Endothelial cell of umbilical vein (primary cell): ENCODE measurements at regions of chr3 and their contacts with region 1.

Region 1: GRCh38 chr3:64612082-64612860 is 75.5 kb downstream of the ADAMTS9 start:
- DNase-seq: no peak
- H3K4me3 ChIP-seq: no peak overlapping the region
- H3K27ac ChIP-seq: no peak overlapping the region
- H3K4me1 ChIP-seq: peaks cover 16% of the 10 kb centered on the region
- H3K27me3 ChIP-seq: no peaks in the 10 kb centered on the region
- CTCF ChIP-seq: no peak
- POLR2A ChIP-seq: no peak

Region 2: GRCh38 chr3:64576376-64576775 is 35.9 kb before region 1 on chr3:
- CTCF ChIA-PET with region 1: no interaction called
- POLR2A ChIA-PET with region 1: no interaction called
- dilution Hi-C with region 1: no loop called
- intact Hi-C with region 1: no loop called
- DNase-seq: no peak
- H3K4me3 ChIP-seq: no peak overlapping the region
- H3K27ac ChIP-seq: no peak overlapping the region
- H3K4me1 ChIP-seq: peaks cover 5% of the 10 kb centered on the region
- H3K27me3 ChIP-seq: no peaks in the 10 kb centered on the region
- CTCF ChIP-seq: no peak
- POLR2A ChIP-seq: no peak

Region 3: DNA sequence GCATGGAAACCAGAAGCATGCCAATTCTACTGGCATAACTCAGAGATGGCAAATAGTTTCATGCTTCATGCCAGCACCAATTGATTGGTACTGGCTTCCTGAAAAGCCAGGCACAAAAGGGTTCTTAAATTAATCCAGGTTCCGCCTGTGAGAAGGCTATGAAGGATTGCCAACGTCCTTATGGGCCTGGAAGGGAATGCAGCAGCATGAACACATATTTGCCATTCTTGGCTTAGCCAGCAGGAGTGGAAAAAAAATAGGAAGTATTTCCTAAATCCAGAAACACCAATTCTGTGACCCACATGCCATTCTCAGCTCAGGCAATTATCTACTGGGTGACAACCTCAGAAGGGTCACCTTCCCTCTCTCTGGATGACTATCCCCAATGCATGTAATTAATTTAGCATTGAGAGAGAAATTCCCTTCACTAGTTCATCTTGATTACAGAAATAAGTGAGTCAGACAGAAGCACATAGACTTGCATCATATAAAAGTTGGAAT is 39.5 kb after region 1 on chr3:
- CTCF ChIA-PET with region 1: interaction called, 4 read pairs
- POLR2A ChIA-PET with region 1: no interaction called
- dilution Hi-C with region 1: no loop called
- intact Hi-C with region 1: loop called (anchors 1 kb)
- DNase-seq: peak; percentile 14
- H3K4me3 ChIP-seq: no peak overlapping the region
- H3K27ac ChIP-seq: no peak overlapping the region
- H3K4me1 ChIP-seq: peaks cover 22% of the 10 kb centered on the region
- H3K27me3 ChIP-seq: no peaks in the 10 kb centered on the region
- CTCF ChIP-seq: no peak
- POLR2A ChIP-seq: no peak

Region 4: DNA sequence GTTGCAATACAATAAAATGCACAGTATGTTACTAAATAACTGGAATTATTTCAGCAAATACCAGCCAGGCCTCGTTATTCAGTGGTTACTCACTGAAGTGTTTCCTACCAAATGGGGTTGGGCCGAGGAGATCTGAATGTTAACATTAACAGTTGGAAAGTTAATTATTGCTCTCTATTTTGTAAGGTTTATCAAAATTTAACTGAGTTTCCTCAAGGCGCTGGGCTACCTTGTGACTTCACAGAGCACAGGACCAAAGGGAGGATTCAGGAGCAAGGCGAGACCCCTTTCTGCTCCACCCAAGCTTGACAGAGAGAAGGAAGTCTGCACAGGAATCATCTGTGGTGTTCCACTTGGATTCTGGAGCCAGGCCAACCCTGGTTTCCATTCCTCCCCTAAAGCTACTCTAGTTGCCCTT is 53.9 kb after region 1 on chr3:
- CTCF ChIA-PET with region 1: interaction called, 3 read pairs
- POLR2A ChIA-PET with region 1: no interaction called
- dilution Hi-C with region 1: no loop called
- intact Hi-C with region 1: loop called (anchors 1 kb)
- DNase-seq: peak; percentile 83
- H3K4me3 ChIP-seq: no peak overlapping the region
- H3K27ac ChIP-seq: peak overlapping the region; percentile 70
- H3K4me1 ChIP-seq: peaks cover 24% of the 10 kb centered on the region
- H3K27me3 ChIP-seq: no peaks in the 10 kb centered on the region
- CTCF ChIP-seq: no peak
- POLR2A ChIP-seq: no peak

Region 5: GRCh38 chr3:64796607-64797399 is 184.5 kb after region 1 on chr3:
- CTCF ChIA-PET with region 1: no interaction called
- POLR2A ChIA-PET with region 1: no interaction called
- dilution Hi-C with region 1: no loop called
- intact Hi-C with region 1: loop called (anchors 1 kb)
- DNase-seq: peak; percentile 88
- H3K4me3 ChIP-seq: no peak overlapping the region
- H3K27ac ChIP-seq: peak overlapping the region; percentile 87
- H3K4me1 ChIP-seq: peaks cover 26% of the 10 kb centered on the region
- H3K27me3 ChIP-seq: no peaks in the 10 kb centered on the region
- CTCF ChIP-seq: no peak
- POLR2A ChIP-seq: peak; percentile 71

Region 6: DNA sequence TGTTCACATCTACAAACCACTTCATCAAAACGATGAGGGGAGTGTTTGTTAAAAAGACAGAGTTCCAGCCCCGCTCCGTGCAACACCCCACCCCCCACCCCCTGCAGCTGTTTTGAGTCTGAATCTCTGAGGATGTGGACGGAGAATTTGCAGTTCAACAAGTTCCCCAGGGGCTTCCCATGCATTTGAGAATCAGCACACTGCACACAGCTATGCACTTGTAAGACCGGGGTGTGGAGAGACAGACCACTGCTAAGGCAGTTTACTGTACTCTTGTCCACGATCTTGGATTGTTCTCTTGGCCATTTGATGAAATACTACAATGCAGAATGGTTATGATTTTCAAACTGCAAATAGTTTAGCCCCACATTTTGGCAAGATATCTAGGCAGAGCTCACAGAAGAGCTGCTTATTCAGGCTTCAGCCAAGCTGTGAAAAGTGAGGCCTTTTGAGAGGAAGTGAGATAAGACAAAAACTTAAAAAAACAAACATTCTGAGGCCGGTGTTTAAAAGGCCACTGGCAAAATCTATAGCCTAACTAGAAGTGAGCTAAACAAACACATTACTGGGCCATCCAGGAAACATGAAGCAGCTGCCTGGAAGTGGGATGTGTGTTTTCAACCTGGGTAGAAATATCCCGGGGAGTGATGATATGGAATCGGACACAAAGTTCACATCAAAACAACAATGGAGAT is 383.7 kb after region 1 on chr3:
- CTCF ChIA-PET with region 1: no interaction called
- POLR2A ChIA-PET with region 1: no interaction called
- dilution Hi-C with region 1: no loop called
- intact Hi-C with region 1: loop called (anchors 10 kb)
- DNase-seq: peak; percentile 91
- H3K4me3 ChIP-seq: no peak overlapping the region
- H3K27ac ChIP-seq: peak overlapping the region; percentile 60
- H3K4me1 ChIP-seq: peaks cover 33% of the 10 kb centered on the region
- H3K27me3 ChIP-seq: no peaks in the 10 kb centered on the region
- CTCF ChIP-seq: no peak
- POLR2A ChIP-seq: no peak